Natural killer cell (primary cell): ENCODE measurements at regions of chr6 and their contacts with region 1.

Region 1: GRCh38 chr6:137764464-137764863 is 102.6 kb upstream of the TNFAIP3 start:
- DNase-seq: no peak
- ATAC-seq: no peak
- H3K4me3 ChIP-seq: no peak overlapping the region
- H3K4me3 Mint-ChIP-seq: no peak overlapping the region
- H3K27ac ChIP-seq: no peak overlapping the region
- H3K27ac Mint-ChIP-seq: peak overlapping the region; percentile 73 to 89
- H3K4me1 ChIP-seq: peaks cover 23% of the 10 kb centered on the region
- H3K4me1 Mint-ChIP-seq: peaks cover 36 to 44% of the 10 kb centered on the region in 2 donors
- H3K27me3 ChIP-seq: no peaks in the 10 kb centered on the region
- H3K27me3 Mint-ChIP-seq: peaks cover 0 to 9% of the 10 kb centered on the region in 2 donors
- CTCF ChIP-seq: no peak

Region 2: GRCh38 chr6:137432054-137432611 is 332.3 kb before region 1 on chr6:
- intact Hi-C with region 1: no loop called
- DNase-seq: no peak
- ATAC-seq: peak in 1 of 3 donors; percentile 28
- H3K4me3 ChIP-seq: no peak overlapping the region
- H3K4me3 Mint-ChIP-seq: no peak overlapping the region
- H3K27ac ChIP-seq: no peak overlapping the region
- H3K27ac Mint-ChIP-seq: no peak overlapping the region
- H3K4me1 ChIP-seq: peaks cover 4% of the 10 kb centered on the region
- H3K4me1 Mint-ChIP-seq: peaks cover 0 to 11% of the 10 kb centered on the region in 2 donors
- H3K27me3 ChIP-seq: no peaks in the 10 kb centered on the region
- H3K27me3 Mint-ChIP-seq: peaks cover 8 to 10% of the 10 kb centered on the region in 2 donors
- CTCF ChIP-seq: no peak

Region 3: GRCh38 chr6:137811121-137811915 is 46.9 kb after region 1 on chr6:
- intact Hi-C with region 1: loop called (anchors 5 kb)
- DNase-seq: peak; percentile 71 to 95
- ATAC-seq: peak; percentile 86 to 96 (median 93)
- H3K4me3 ChIP-seq: no peak overlapping the region
- H3K4me3 Mint-ChIP-seq: peak overlapping the region; percentile 77
- H3K27ac ChIP-seq: peak overlapping the region; percentile 77
- H3K27ac Mint-ChIP-seq: peak overlapping the region; percentile 79 to 94
- H3K4me1 ChIP-seq: peaks cover 23% of the 10 kb centered on the region
- H3K4me1 Mint-ChIP-seq: peaks cover 32 to 33% of the 10 kb centered on the region in 2 donors
- H3K27me3 ChIP-seq: no peaks in the 10 kb centered on the region
- H3K27me3 Mint-ChIP-seq: no peaks in the 10 kb centered on the region
- CTCF ChIP-seq: no peak

Region 4: GRCh38 chr6:138044458-138044857 is 280.0 kb after region 1 on chr6:
- intact Hi-C with region 1: no loop called
- DNase-seq: no peak
- ATAC-seq: no peak
- H3K4me3 ChIP-seq: no peak overlapping the region
- H3K4me3 Mint-ChIP-seq: no peak overlapping the region
- H3K27ac ChIP-seq: no peak overlapping the region
- H3K27ac Mint-ChIP-seq: no peak overlapping the region
- H3K4me1 ChIP-seq: no peaks in the 10 kb centered on the region
- H3K4me1 Mint-ChIP-seq: no peaks in the 10 kb centered on the region
- H3K27me3 ChIP-seq: no peaks in the 10 kb centered on the region
- H3K27me3 Mint-ChIP-seq: peaks cover 6 to 16% of the 10 kb centered on the region in 2 donors
- CTCF ChIP-seq: no peak